Caco-2 (cell line): ENCODE measurements at regions of chr3 and their contacts with region 1.

Region 1: GRCh38 chr3:119498186-119498987 is at the start of gene TIMMDC1:
- DNase-seq: peak; percentile 96 to 97
- H3K4me3 ChIP-seq: peak within 1 kb of the TSS; percentile 42
- H3K4me3 Mint-ChIP-seq: peak within 1 kb of the TSS; percentile 99
- H3K27ac Mint-ChIP-seq: peak within 1 kb of the TSS; percentile 98
- H3K4me1 ChIP-seq: 0 out of 2 replicates have a peak, but pooled peaks cover 7% of the 10 kb centered on the region
- H3K4me1 Mint-ChIP-seq: peaks cover 12% of the 10 kb centered on the region
- H3K27me3 ChIP-seq: no peaks in the 10 kb centered on the region
- H3K27me3 Mint-ChIP-seq: no peaks in the 10 kb centered on the region
- CTCF ChIP-seq: no peak
- total RNA-seq, gene TIMMDC1: 64.5 and 66.7 TPM in 2 replicates

Region 2: DNA sequence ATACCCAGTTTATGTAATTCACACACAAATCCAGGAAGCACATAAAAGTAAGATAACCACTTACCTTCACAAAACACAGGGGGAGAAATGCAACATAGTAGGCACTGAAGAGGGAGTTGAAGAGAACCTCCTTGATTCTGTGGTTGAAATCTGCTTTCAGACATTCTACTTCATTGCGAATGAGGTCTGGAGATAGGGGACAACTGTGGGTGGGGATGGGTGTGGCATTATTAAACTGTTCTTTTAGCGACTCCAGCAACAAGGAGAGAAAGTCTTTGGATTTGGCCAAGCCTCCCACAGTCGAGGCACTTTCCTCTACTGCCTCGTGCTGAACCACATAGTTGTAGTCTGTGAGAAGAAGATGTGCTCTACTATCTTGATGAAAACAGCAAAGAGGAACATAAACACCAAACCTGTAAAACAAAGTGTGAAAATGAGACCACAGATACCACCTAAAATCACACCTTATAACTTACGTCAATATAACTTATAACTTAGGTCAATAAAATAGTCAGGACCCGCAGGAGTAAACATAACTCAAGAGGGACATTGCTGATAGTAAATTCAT is 60.6 kb before region 1 on chr3:
- CTCF ChIA-PET with region 1: no interaction called
- POLR2A ChIA-PET with region 1: no interaction called
- intact Hi-C with region 1: no loop called
- DNase-seq: no peak
- H3K4me3 ChIP-seq: no peak overlapping the region
- H3K4me3 Mint-ChIP-seq: no peak overlapping the region
- H3K27ac Mint-ChIP-seq: no peak overlapping the region
- H3K4me1 ChIP-seq: no peaks in the 10 kb centered on the region
- H3K4me1 Mint-ChIP-seq: no peaks in the 10 kb centered on the region
- H3K27me3 ChIP-seq: no peaks in the 10 kb centered on the region
- H3K27me3 Mint-ChIP-seq: no peaks in the 10 kb centered on the region
- CTCF ChIP-seq: no peak

Region 3: DNA sequence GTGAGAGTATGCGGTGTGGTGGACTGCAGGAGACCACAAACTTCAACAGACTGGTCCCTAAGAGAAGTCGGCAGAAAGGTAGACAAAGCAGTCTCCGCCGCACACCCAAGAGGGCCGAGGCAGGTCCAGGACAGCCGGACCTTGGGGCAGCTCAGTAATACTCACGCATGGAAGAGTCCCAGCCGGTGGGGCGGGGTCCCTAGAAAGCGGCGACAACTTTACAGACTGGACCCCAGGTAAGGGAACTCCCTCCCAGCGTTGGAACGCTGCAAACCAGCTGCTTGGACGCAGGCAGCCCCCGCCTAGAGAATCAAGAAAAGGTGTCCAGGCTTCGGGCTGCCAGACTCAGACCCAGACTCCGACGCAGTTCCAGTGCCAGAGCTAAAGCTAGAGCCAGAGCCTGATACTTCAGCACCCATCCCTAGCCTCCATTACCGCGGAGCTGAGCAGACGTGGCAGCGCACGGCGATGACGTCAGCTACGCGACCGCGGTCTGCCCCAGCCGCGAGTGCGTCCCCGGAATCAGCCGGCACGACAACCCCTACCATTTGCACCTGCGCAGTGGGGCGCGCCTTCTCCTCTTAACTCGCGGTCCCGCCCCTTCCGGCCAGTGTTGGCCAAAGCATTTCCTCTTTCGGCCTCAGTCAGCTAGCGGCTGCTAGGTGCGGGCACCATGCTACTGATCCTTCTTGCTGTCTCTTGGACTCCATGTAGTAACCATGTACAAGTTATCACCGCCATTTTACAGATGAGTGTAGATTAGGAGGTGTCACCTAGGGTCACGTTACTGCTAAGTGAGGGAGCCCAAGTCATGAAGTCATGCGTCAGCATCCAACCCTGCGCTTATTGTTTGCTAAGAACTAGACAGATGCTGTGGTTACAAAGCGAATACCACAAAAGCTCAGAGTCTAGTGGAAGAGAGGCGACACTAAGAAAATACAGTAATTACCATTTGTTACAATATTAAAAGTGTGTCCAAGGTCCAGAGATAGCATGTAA is 34.9 kb before region 1 on chr3 and contains the start of gene TMEM39A:
- CTCF ChIA-PET with region 1: interaction called, 3 read pairs
- POLR2A ChIA-PET with region 1: interaction called, 29 read pairs
- intact Hi-C with region 1: loop called (anchors 1 kb)
- DNase-seq: peak; percentile 98 to 99
- H3K4me3 ChIP-seq: peak within 1 kb of the TSS; percentile 69
- H3K4me3 Mint-ChIP-seq: peak within 1 kb of the TSS; percentile 94
- H3K27ac Mint-ChIP-seq: peak within 1 kb of the TSS; percentile 97
- H3K4me1 ChIP-seq: no peaks in the 10 kb centered on the region
- H3K4me1 Mint-ChIP-seq: peaks cover 7% of the 10 kb centered on the region
- H3K27me3 ChIP-seq: no peaks in the 10 kb centered on the region
- H3K27me3 Mint-ChIP-seq: no peaks in the 10 kb centered on the region
- CTCF ChIP-seq: no peak
- total RNA-seq, gene TMEM39A: 50.7 and 52.1 TPM in 2 replicates

Region 4: DNA sequence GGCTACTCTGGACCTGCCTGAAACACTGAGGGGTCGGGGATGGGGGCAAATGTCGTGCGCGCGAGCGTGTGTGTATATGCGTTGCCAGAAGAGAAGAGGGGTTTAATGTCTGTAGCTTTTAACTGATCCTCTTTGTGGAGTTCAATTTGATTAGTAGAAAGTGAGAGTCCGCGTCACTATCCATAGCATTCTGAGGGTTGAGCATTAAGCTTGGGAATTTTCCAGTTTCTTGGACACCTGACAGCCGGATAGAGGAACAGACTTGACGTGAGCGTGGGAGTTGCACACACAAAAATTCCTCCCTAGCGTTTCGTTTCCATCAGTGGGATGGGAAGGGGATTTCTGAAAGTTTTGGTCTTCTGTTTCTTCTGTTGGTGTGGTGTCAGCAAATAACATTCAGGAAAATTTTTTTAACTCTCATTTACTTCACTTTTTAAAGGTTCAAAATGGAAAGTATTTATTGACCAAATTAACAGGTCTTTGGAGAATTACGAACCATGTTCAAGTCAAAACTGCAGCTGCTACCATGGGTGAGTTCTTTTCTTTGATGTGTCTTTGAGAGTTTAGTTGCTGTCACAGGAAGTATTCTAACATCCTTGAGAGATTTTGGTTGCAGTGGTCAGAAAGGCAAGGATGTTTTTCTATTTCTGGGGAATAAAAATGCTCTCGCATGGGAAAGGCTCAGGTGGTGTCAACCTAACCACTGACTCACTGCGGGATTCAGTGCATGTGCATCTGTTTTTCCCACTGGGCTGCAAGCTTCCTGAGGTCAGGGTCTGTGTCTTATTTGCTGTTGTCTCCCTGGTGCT is 28.8 kb before region 1 on chr3:
- CTCF ChIA-PET with region 1: no interaction called
- POLR2A ChIA-PET with region 1: interaction called, 11 read pairs
- intact Hi-C with region 1: loop called (anchors 1 kb)
- DNase-seq: no peak
- H3K4me3 ChIP-seq: peak overlapping the region; percentile 64
- H3K4me3 Mint-ChIP-seq: peak overlapping the region; percentile 92
- H3K27ac Mint-ChIP-seq: peak overlapping the region; percentile 84
- H3K4me1 ChIP-seq: peaks cover 6% of the 10 kb centered on the region
- H3K4me1 Mint-ChIP-seq: peaks cover 7% of the 10 kb centered on the region
- H3K27me3 ChIP-seq: no peaks in the 10 kb centered on the region
- H3K27me3 Mint-ChIP-seq: no peaks in the 10 kb centered on the region
- CTCF ChIP-seq: no peak